Activated CD4-positive, alpha-beta memory T cell treated with anti-CD3 and anti-CD28 coated beads, Interleukin-2, amount 10 ng/mL, durations not matched to agents 7 days and 5 days (primary cell): ENCODE measurements at regions of chr17 and their contacts with region 1.

Region 1: DNA sequence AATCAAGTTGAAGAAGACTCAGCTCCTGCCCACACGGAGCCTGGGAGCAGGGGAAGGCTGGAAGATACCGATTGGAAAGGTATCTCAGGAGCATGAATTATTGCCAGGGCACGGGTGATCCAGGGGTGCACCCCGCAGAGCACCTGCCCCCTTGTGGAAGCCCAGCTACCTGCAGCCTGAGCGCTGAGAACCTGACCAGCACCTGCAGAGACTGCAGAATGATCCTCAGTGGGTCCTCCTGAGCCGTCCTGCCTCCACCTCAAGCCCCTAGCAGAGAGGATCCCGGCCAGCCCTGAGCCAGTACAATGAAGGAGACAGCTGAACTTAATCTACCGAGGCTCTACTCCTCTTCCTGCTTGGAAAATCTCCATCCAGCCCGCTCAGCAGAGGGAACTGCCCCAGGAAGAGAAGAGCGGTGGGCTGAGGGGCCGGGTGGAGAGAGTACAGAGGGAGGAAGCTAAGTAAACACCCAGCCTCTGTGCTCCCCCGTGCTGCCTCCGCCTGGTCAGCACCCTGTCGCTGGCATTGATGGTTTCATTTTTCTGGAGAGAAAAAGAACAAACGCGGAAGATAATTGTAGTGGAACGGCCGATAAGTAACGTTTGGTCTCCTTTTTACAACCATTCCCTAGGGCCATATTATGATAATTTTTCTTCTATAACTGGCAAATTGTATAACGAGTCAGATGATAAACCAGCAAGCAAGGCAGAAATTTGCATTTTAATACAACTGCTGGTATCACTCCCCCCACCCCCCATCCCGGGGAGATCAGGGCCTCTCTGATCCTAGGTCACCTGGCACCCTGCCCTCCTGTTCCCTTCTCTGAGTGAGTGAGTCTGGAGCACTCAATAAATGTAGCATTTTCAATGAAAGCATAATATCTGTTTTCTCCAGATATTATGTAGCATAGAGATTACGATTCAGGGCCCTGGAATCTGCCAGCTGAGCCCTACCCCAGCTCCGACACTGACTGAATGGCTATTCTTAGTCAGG is 204.5 kb upstream of the RPL38 start:
- DNase-seq: peak; percentile 69
- H3K4me3 Mint-ChIP-seq: no peak overlapping the region
- H3K27ac Mint-ChIP-seq: no peak overlapping the region
- H3K4me1 Mint-ChIP-seq: no peaks in the 10 kb centered on the region
- H3K27me3 Mint-ChIP-seq: peaks cover 20% of the 10 kb centered on the region

Region 2: GRCh38 chr17:73814075-73814474 is 184.9 kb before region 1 on chr17:
- CTCF ChIA-PET with region 1: no interaction called
- POLR2A ChIA-PET with region 1: no interaction called
- DNase-seq: peak; percentile 21
- H3K4me3 Mint-ChIP-seq: no peak overlapping the region
- H3K27ac Mint-ChIP-seq: no peak overlapping the region
- H3K4me1 Mint-ChIP-seq: peaks cover 2% of the 10 kb centered on the region
- H3K27me3 Mint-ChIP-seq: no peaks in the 10 kb centered on the region

Region 3: DNA sequence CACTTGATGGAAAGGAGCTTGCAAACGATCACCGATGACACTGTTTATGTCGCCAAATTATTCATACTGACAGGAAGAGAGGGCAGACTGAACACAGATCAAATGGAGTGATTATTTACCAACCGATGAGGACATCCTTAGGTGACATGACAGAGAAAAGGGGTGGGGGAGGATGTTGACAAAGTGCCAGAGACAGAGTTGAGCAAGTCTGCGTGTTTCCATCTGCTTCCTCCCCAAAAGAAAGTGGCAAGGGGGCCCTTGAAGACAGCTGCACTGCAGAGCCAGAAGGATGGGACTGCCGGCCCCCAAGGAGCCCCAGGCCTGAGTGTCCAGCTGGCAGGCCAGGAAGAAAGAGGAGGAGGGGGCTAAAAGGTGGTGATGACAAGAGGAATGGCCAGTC is 13.5 kb after region 1 on chr17:
- CTCF ChIA-PET with region 1: interaction called, 16 read pairs
- POLR2A ChIA-PET with region 1: interaction called, 4 read pairs
- DNase-seq: peak; percentile 65
- H3K4me3 Mint-ChIP-seq: no peak overlapping the region
- H3K27ac Mint-ChIP-seq: peak overlapping the region; percentile 91
- H3K4me1 Mint-ChIP-seq: peaks cover 45% of the 10 kb centered on the region
- H3K27me3 Mint-ChIP-seq: peaks cover 39% of the 10 kb centered on the region